Panc1 (cell line): ENCODE measurements at regions of chr1 and their contacts with region 1.

Region 1: GRCh38 chr1:8147956-8148355 is 121.8 kb upstream of the ERRFI1 start:
- DNase-seq: no peak
- ATAC-seq: peak; percentile 46; the same call in 1 of the 2 replicates
- H3K4me3 ChIP-seq: no peak overlapping the region
- H3K27ac ChIP-seq: peak overlapping the region; percentile 91
- H3K4me1 ChIP-seq: peaks cover 19% of the 10 kb centered on the region
- H3K27me3 ChIP-seq: no peaks in the 10 kb centered on the region
- CTCF ChIP-seq: no peak

Region 2: GRCh38 chr1:8171751-8172464 is 24.0 kb after region 1 on chr1:
- CTCF ChIA-PET with region 1: no interaction called
- POLR2A ChIA-PET with region 1: no interaction called
- in situ Hi-C with region 1: no loop called
- intact Hi-C with region 1: loop called (anchors 1 kb)
- DNase-seq: no peak
- ATAC-seq: no peak
- H3K4me3 ChIP-seq: no peak overlapping the region
- H3K27ac ChIP-seq: peak overlapping the region; percentile 64
- H3K4me1 ChIP-seq: peaks cover 31% of the 10 kb centered on the region
- H3K27me3 ChIP-seq: no peaks in the 10 kb centered on the region
- CTCF ChIP-seq: no peak

Region 3: DNA sequence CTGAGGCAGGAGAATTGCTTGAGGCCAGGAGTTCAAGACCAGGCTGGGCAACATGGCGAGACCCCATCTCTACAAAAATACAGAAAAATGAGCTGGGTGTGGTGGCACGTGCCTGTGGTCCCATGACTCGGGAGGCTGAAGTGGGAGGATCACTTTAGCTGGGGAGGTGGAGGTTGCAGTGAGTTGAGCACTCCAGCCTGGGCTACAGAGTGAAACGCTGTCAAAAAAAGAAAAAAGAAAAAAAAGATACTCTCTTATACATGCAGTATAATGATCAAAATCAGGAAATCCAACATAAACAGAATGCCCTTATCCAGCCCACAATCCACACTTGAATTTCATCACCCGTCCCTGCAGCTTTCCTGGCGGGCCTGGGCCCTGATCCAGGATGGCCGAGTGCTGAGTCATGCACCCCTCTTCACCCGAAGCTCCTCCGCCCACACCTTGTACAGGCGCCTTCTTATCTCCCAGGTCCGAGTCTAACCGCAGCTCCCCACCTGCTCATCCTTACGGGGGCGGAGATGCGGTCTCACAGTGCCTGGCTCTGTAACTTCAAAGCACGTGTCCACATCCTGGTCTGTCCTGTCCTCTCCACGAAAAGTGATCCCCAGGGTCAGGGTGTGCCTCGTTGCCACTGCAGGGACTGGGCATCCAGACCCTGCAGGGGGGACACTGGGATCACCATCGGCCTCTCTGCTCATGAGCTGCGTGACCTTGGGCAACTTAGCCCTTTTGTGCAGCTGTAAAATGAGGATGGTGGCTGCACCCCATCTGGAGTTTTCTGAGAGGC is 49.7 kb after region 1 on chr1:
- CTCF ChIA-PET with region 1: no interaction called
- POLR2A ChIA-PET with region 1: no interaction called
- in situ Hi-C with region 1: no loop called
- intact Hi-C with region 1: no loop called
- DNase-seq: peak; percentile 64
- ATAC-seq: peak; percentile 55
- H3K4me3 ChIP-seq: no peak overlapping the region
- H3K27ac ChIP-seq: peak overlapping the region; percentile 99
- H3K4me1 ChIP-seq: peaks cover 76% of the 10 kb centered on the region
- H3K27me3 ChIP-seq: no peaks in the 10 kb centered on the region
- CTCF ChIP-seq: no peak

Region 4: GRCh38 chr1:8431019-8431418 is 283.1 kb after region 1 on chr1:
- CTCF ChIA-PET with region 1: no interaction called
- POLR2A ChIA-PET with region 1: no interaction called
- in situ Hi-C with region 1: no loop called
- intact Hi-C with region 1: no loop called
- DNase-seq: no peak
- ATAC-seq: no peak
- H3K4me3 ChIP-seq: no peak overlapping the region
- H3K27ac ChIP-seq: no peak overlapping the region
- H3K4me1 ChIP-seq: peaks cover under 1% of the 10 kb centered on the region; the same call in 1 of the 2 replicates
- H3K27me3 ChIP-seq: no peaks in the 10 kb centered on the region
- CTCF ChIP-seq: no peak